Dorsolateral prefrontal cortex (tissue), 120 donors: ENCODE measurements at regions of chr15 and their contacts with region 1.

Region 1: DNA sequence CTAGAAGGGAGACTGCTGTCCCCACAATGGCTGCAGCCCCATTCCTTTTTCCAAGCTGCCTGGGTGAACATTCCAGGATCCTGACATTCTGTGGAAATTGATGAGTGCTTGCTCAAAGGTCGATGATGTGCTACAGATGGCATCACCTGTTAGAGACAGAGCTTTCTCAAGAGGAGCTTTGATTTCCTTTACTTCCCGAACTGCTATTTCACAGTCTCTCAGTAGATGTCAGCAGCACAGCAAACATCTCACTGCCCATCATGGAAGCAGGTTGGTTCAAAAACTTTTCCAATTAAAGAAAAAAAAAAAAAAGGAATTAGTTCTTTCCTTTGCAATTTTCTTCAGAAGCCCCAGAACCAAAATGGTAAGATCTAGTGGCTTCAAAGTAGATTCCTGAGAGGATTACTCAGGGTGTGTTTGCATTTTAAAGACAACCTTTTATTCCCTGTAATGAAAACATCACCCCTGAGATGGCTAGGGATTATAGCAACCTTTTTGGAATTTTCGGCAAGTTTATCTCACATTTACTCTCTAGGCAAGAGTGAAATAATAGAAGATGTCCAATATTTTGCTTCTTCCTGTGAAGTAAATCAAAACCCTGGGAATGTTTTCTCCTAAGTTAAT is 44.8 kb downstream of the POLR2M start:
- DNase-seq: peak in 1 of 10 donors; percentile 27
- H3K4me3 ChIP-seq: no peak overlapping the region
- H3K27ac ChIP-seq: peak overlapping the region in 19 of 59 donors; percentile 3 to 67 (median 30)
- H3K27me3 ChIP-seq: no peaks in the 10 kb centered on the region
- CTCF ChIP-seq: peak in 55 of 56 donors; percentile 35 to 85 (median 69)

Region 2: GRCh38 chr15:57820119-57820518 is 68.8 kb after region 1 on chr15:
- intact Hi-C with region 1: loop called in 1 of 2 experiments (anchors 2 kb)
- DNase-seq: no peak
- H3K4me3 ChIP-seq: no peak overlapping the region
- H3K27ac ChIP-seq: peak overlapping the region in 28 of 59 donors; percentile 3 to 99 (median 94)
- H3K27me3 ChIP-seq: peaks cover 0 to 11% (median 0%) of the 10 kb centered on the region in 45 donors
- CTCF ChIP-seq: no peak

Region 3: DNA sequence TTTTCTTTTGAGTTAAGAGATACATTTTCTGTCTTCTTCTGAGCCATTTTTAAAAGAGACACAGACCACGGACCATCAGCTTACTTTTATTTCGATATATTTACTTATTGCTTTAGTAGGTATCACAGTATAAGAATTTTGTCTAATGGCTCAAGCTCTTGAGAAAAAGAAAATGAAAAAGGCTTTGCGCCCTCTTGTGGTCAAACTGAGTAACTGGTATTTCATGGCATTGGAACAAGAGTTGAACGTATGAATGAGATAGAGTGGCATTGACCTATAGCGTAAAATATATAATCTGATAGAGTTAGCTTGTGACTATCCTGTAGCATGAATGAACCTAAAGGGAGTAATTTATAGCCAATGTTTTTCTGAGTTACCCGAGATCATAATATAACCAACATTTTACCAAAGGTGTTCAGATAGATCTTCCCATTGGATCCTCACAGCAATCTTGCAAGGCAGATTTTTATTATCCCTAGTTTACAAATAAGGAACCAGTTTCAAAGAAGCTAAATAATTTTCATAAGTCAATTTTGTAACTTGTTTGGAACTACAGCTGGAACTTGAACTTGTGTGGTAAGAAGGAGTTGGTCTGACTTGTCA is 109.8 kb after region 1 on chr15:
- intact Hi-C with region 1: loop called (anchors 1 to 5 kb)
- DNase-seq: peak in 1 of 10 donors; percentile 18
- H3K4me3 ChIP-seq: no peak overlapping the region
- H3K27ac ChIP-seq: no peak overlapping the region
- H3K27me3 ChIP-seq: peaks cover 0 to 3% (median 0%) of the 10 kb centered on the region in 45 donors
- CTCF ChIP-seq: peak; percentile 82 to 98 (median 92)

Region 4: DNA sequence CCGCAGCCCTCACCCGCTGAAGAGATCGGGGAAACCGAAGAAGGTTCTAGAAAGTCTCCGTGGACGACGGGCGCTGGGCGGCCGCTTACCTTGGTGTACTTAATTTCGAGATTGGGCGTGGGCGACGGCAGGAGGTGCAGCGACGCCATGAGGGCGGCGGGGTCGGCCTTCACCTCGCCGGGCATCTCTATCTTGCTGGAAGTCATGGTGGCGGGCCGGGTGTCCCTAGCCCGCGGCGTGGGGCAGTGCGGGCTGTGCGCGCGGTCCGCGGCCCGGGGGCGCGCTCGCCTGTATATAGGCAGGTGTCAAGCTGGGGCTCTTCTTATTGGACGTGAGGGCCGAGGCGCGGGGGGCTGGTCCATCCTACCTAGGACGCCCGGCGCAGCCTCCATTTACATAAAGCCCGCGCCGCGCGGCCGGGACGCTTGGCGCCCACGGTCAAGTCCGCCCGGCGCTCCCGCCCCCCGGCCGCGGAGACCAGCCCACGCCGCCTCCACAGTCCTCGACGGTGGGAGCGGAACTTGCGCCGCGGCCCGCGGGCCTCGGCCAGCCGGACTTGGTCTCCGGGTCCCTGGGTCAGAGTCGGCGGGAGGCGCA is 314.3 kb after region 1 on chr15 and contains the start of gene ALDH1A2:
- intact Hi-C with region 1: loop called (anchors 2 to 5 kb)
- DNase-seq: no peak
- H3K4me3 ChIP-seq: peak within 1 kb of the TSS in 57 of 59 donors; percentile 6 to 66 (median 48)
- H3K27ac ChIP-seq: peak within 1 kb of the TSS in 5 of 59 donors; percentile 28 to 58 (median 46)
- H3K27me3 ChIP-seq: peaks cover 4 to 74% (median 53%) of the 10 kb centered on the region in 45 donors
- CTCF ChIP-seq: no peak
- total RNA-seq, gene ALDH1A2: 1.8 to 20.7 (median 7.5) TPM

Region 5: GRCh38 chr15:58182460-58183163 is 431.3 kb after region 1 on chr15:
- intact Hi-C with region 1: loop called in 1 of 2 experiments (anchors 5 kb)
- DNase-seq: peak in 7 of 10 donors; percentile 7 to 69 (median 38)
- H3K4me3 ChIP-seq: no peak overlapping the region
- H3K27ac ChIP-seq: no peak overlapping the region
- H3K27me3 ChIP-seq: peaks cover 0 to 2% (median 0%) of the 10 kb centered on the region in 45 donors
- CTCF ChIP-seq: peak; percentile 14 to 94 (median 79)